AG04449 (cell line): ENCODE measurements at regions of chr1 and their contacts with region 1.

Region 1: DNA sequence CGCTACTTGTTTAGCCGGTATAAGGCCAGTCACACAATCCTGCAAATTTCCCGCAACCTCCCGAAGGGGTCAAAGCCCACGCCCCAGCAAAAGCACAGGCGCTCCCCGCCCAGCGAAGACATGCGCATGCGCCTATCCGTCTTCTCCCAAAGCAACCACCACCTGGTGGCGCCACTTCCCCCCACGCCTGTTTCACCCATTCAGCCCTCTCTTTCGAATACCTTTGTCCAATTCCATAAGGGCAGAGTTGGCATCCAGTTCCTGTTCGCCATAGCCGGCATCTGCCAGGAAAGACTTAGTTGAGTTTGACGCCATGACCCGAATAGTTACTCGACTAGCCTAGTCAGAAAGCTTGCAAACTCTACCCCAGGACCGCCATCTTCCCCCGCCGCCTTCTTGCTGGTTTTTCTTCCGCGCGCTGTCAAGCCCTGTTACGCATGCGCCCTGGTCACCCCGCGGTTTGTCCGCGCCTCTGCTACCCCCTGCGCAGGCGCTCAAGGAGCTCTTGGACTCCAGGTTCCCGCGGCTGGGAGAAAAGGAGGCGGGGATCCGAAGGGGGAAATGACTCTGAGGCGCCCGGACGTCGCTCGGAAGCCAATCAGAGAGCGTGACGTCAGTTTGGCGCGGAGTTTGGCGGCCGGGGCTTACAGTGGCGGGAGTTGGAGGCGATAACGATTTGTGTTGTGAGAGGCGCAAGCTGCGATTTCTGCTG is at the starts of genes DTL and INTS7:
- DNase-seq: peak; percentile 95
- H3K4me3 ChIP-seq: peak within 1 kb of the TSS; percentile 91
- CTCF ChIP-seq: peak; percentile 69

Region 2: DNA sequence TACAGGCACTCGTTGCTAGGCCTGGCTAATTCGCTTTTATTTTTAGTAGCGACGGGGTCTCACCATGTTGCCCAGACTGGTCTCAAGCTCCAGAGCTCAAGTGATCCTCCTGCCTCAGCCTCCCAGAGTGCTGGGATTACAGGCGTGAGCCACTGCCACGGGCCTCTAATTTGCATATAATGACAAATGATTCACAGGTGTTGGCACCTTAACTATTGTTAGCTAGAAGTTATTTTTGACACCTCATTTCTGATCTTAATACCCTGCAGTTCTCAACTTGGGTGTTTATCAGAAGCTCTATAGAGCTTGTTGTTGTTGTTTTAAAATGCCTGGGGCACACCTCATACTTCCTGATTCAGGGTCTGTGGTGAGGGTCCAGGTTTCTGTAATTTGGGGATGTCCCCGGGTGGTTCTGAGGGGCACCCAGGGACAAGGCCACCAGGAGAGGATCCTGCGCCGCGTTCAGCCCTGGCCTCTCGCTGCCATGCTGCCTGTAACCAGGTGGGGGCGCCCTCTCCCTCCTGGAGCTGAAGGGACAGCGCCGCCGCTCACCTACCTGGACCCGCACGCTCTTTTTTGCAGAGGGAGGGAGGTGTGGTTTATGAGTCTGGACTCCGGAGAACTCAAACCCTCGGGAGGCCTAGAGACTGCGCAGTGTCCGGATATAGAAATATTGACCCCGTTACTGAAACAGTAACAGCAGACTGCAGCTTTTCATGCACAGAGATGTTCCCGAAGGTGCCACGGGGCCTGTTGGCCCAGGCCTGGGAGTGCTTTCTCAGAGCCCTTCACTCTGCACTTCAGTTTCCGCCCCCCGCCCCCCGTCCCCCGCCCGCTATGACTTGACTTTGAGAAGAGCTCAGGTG is 336.9 kb before region 1 on chr1:
- CTCF ChIA-PET with region 1: interaction called, 78 read pairs
- POLR2A ChIA-PET with region 1: no interaction called
- DNase-seq: no peak
- H3K4me3 ChIP-seq: peak overlapping the region; percentile 6; the same call in 1 of the 2 replicates
- CTCF ChIP-seq: peak; percentile 99

Region 3: DNA sequence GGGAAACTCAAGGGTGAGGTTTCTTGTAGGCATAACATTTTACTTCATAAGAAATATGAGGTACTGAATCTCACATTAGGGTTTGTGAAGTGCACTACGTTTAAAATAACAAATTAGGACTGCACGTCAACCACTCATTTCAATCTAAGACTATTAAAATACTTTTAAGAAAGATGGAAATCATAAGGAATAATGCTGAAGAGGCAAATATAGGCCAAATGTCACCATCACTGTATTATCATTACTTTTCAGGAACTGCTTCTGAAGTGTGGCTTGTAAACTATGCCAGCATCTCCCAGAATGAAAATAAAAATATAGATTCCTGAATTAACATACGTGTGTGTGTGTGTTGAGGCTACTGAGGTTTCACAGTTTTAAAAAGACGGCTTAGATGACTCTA is 56.7 kb before region 1 on chr1:
- CTCF ChIA-PET with region 1: interaction called, 12 read pairs
- POLR2A ChIA-PET with region 1: no interaction called
- DNase-seq: no peak
- H3K4me3 ChIP-seq: no peak overlapping the region
- CTCF ChIP-seq: no peak

Region 4: GRCh38 chr1:212012034-212012740 is 23.1 kb before region 1 on chr1:
- CTCF ChIA-PET with region 1: interaction called, 78 read pairs
- POLR2A ChIA-PET with region 1: no interaction called
- DNase-seq: no peak
- H3K4me3 ChIP-seq: no peak overlapping the region
- CTCF ChIP-seq: peak; percentile 94

Region 5: GRCh38 chr1:212045981-212046380 is 10.7 kb after region 1 on chr1:
- CTCF ChIA-PET with region 1: interaction called, 92 read pairs
- POLR2A ChIA-PET with region 1: no interaction called
- DNase-seq: no peak
- H3K4me3 ChIP-seq: no peak overlapping the region
- CTCF ChIP-seq: no peak

Region 6: GRCh38 chr1:212208960-212209659 is 173.8 kb after region 1 on chr1:
- CTCF ChIA-PET with region 1: no interaction called
- POLR2A ChIA-PET with region 1: no interaction called
- DNase-seq: no peak
- H3K4me3 ChIP-seq: no peak overlapping the region
- CTCF ChIP-seq: no peak

Region 7: GRCh38 chr1:212315907-212316306 is 280.6 kb after region 1 on chr1:
- CTCF ChIA-PET with region 1: interaction called, 20 read pairs
- POLR2A ChIA-PET with region 1: interaction called, 3 read pairs
- DNase-seq: no peak
- H3K4me3 ChIP-seq: no peak overlapping the region
- CTCF ChIP-seq: no peak

Region 8: DNA sequence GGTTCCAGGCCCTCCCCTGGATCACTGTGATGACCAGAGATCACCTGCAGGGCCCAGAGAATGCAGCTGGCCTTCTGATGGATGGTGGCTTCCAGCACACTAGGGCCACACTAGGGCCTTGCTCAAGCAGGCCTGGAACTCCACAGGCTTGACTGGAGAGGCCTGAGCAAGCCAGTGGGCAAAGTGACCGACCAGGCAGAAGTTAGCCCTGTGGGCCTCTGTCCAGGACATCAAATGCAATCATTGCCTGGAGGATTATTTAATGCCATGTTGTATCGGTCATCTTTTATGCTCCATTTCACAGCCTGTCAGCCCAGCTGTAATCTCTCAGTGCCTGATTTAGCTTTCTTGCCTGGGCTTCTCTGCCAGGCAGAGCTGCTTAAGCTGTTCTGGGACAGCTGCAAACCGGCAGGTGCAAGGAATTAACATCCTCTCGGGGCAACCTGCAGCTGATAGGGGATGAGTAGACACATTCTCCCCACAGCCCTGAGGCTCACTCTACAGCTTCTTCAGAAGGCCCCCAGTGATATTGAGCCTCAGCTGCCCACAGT is 415.1 kb after region 1 on chr1:
- CTCF ChIA-PET with region 1: interaction called, 73 read pairs
- POLR2A ChIA-PET with region 1: no interaction called
- DNase-seq: no peak
- H3K4me3 ChIP-seq: no peak overlapping the region
- CTCF ChIP-seq: no peak